ENCODE measurements at regions of chr19 and their contacts with region 1.

Region 1: GRCh38 chr19:40721936-40722661 is 5.2 kb downstream of the ITPKC start:
- DNase-seq: no peak
- ATAC-seq: no peak
- H3K4me3 ChIP-seq: no peak overlapping the region
- H3K27ac ChIP-seq: peak overlapping the region in 1 of 2 experiments; percentile 12; a peak in 1 of 6 replicates
- H3K4me1 ChIP-seq: peaks cover 33% of the 10 kb centered on the region
- CTCF ChIP-seq: no peak
- EP300 ChIP-seq: no peak
- POLR2A ChIP-seq: no peak
- RAD21 ChIP-seq: no peak

Region 2: GRCh38 chr19:40392872-40393845 is 328.9 kb before region 1 on chr19:
- CTCF ChIA-PET with region 1: no interaction called
- POLR2A ChIA-PET with region 1: no interaction called
- DNase-seq: peak; percentile 67 to 81
- ATAC-seq: peak; percentile 78 to 89
- H3K4me3 ChIP-seq: no peak overlapping the region
- H3K27ac ChIP-seq: peak overlapping the region in 1 of 2 experiments; percentile 7; a peak in 2 of 6 replicates
- H3K4me1 ChIP-seq: no peaks in the 10 kb centered on the region
- CTCF ChIP-seq: peak; percentile 49
- EP300 ChIP-seq: no peak
- POLR2A ChIP-seq: no peak
- RAD21 ChIP-seq: peak; percentile 39 to 53; a peak in 4 of 5 replicates

Region 3: DNA sequence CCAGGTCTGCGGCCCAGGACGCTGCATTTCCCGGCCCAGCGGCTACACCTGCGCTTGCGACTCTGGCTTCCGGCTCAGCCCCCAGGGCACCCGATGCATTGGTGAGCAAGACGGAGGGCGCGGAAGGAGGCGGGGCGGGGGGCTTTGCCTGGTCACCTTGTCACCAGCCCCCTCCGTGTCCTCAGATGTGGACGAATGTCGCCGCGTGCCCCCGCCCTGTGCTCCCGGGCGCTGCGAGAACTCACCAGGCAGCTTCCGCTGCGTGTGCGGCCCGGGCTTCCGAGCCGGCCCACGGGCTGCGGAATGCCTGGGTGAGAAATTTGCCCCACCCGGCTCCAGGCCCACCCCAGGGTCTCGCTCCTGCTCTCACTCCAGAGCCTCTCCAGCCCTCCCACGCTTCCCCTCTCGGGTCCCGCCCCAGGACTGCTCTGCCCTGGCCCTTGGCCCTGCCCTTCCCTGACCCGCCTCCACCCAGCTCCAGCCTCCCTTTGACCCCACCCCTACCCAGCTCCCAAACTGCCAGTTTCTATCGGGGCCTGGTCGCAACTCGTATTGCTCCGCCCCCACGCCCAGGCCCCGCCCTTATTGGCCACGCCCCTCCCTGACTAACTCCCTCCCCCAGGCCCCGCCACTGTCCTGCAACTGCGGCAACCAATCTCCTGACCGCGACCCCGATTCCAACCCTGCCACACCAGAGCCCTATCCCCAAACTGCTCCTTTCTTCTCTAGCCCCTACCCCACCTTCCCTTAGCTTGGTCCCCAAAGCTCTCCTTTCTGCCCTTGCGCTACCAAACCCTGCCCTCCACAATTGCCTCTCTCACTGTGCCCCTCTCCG is 112.3 kb before region 1 on chr19:
- CTCF ChIA-PET with region 1: no interaction called
- POLR2A ChIA-PET with region 1: no interaction called
- DNase-seq: peak; percentile 93 to 98
- ATAC-seq: peak; percentile 12 to 55; a peak in 5 of 6 replicates
- H3K4me3 ChIP-seq: peak overlapping the region; percentile 49
- H3K27ac ChIP-seq: peak overlapping the region; percentile 60 to 68
- H3K4me1 ChIP-seq: peaks cover 43% of the 10 kb centered on the region
- CTCF ChIP-seq: no peak
- EP300 ChIP-seq: no peak
- POLR2A ChIP-seq: 0 out of 2 replicates have a peak, but pooled peaks have one; percentile 19
- RAD21 ChIP-seq: no peak

Region 4: DNA sequence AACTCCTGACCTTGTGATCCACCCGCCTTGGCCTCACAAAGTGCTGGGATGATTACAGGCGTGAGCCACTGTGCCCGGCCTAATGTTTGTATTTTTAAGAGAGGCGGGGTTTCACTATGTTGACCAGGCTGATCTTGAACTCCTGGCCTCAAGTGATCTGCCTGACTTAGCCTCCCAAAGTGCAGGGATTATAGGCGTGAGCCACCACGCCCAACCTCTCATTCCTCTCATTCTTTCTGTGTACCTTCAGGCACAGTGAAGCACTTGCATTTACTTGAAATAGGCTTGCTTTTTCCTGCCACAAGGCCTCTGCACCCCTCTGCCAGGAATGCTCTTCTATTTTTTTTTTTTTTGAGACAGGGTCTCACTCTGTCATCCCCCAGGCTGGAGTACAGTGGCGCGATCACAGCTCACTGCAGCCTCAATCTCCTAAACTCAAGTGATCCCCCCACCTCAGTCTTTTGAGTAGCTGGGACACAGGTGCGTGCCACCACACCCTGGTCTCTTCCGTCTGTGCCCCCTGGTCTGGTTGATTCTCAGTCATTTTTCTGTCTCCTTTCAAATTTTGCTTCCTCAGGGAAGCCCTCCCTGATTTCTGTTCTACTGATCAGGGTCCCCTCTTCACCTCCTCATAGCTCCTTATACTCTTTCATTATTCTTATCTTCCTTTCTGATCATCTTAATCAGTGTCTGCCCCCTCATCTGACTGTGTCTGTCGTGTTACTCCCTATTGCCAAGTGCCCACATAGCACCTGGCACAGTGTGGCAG is 13.1 kb after region 1 on chr19:
- CTCF ChIA-PET with region 1: interaction called, 199 read pairs
- POLR2A ChIA-PET with region 1: interaction called, 4 read pairs
- DNase-seq: peak in 1 of 2 experiments; percentile 57
- ATAC-seq: no peak
- H3K4me3 ChIP-seq: no peak overlapping the region
- H3K27ac ChIP-seq: no peak overlapping the region
- H3K4me1 ChIP-seq: no peaks in the 10 kb centered on the region
- CTCF ChIP-seq: no peak
- EP300 ChIP-seq: no peak
- POLR2A ChIP-seq: no peak
- RAD21 ChIP-seq: no peak

Region 5: DNA sequence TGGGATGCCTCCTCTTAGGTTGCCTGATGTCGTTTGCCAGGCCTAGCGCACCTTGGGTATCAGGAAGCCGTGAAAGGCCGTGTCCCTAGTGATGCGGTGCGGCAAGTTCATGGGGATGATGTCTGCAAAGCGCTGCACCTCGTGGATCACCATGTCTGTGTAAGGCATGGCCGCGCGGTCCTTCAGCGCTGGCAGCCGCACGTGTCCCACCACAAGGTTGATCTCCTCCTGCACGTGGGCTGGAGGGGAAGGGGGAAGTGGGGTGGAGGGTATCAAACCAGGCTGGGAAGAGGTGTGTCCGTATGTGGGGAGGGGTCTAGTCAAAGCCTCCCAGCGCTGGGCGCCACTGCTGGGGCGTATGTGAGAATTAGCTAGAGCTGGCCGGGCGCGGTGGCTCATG is 100.1 kb after region 1 on chr19:
- CTCF ChIA-PET with region 1: interaction called, 13 read pairs
- POLR2A ChIA-PET with region 1: no interaction called
- DNase-seq: no peak
- ATAC-seq: no peak
- H3K4me3 ChIP-seq: no peak overlapping the region
- H3K27ac ChIP-seq: peak overlapping the region in 1 of 2 experiments; percentile 31; a peak in 2 of 6 replicates
- H3K4me1 ChIP-seq: peaks cover 39% of the 10 kb centered on the region
- CTCF ChIP-seq: no peak
- EP300 ChIP-seq: no peak
- POLR2A ChIP-seq: no peak
- RAD21 ChIP-seq: no peak